Activated CD4-positive, alpha-beta memory T cell treated with anti-CD3 and anti-CD28 coated beads for 36 hours (primary cell): ENCODE measurements at regions of chr9 and their contacts with region 1.

Region 1: DNA sequence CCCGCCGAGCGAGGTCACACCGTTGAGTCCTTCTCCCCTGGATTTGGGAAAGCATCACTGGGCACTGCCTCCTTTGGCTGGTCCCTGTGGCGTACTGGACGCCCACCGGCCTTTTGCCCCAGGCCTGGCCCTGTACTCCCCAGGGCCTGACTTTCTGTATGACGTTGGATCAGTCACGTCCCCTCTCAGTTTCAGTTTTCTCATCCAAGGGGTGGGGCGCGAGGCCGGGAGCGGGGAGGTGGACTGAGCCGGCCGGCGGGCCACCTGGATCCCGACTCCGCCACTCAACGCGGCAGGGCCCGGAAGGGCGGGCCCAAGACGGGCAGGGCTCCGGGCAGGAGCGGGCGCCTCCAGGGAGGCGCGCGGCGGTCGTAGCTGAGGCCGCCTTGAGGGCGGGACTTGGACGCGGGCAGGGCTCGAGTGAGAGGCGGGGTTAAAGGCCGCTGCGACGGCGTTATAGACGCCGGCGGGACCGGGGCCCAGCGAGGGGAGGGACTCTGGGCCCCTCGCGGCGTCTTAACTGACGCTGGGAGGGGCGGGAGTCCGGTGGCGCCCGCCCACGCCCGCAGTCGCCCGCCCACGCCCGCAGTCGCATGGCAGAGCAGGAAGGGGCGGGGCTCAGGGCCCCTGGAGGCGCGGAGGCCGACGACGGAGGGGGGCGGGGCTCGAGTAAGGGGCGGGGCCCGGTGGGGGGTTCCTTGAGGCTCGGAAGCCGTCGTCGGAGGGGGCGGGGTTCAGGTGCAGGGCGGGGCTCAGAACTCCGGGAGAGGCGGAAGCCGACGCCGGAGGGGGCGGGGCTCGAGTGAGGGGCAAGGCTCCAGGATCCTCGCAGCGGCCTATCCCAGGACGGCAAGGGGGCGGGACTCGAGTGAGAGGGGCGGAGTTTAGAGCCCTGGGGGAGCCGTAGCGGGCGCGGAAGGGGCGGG is 549 bp upstream of the CARD19 start:
- DNase-seq: peak; percentile 100
- H3K4me3 Mint-ChIP-seq: peak overlapping the region; percentile 83
- H3K27ac Mint-ChIP-seq: peak overlapping the region; percentile 98
- H3K4me1 Mint-ChIP-seq: peaks cover 73% of the 10 kb centered on the region
- H3K27me3 Mint-ChIP-seq: no peaks in the 10 kb centered on the region

Region 2: GRCh38 chr9:92877531-92878430 is 217.7 kb before region 1 on chr9 and contains the start of gene ZNF484:
- CTCF ChIA-PET with region 1: no interaction called
- POLR2A ChIA-PET with region 1: no interaction called
- intact Hi-C with region 1: loop called (anchors 10 kb)
- DNase-seq: peak; percentile 98
- H3K4me3 Mint-ChIP-seq: peak within 1 kb of the TSS; percentile 97
- H3K27ac Mint-ChIP-seq: peak within 1 kb of the TSS; percentile 97
- H3K4me1 Mint-ChIP-seq: peaks cover 41% of the 10 kb centered on the region
- H3K27me3 Mint-ChIP-seq: no peaks in the 10 kb centered on the region
- total RNA-seq, gene ZNF484: 7.4 to 7.5 TPM

Region 3: GRCh38 chr9:93017621-93018020 is 77.8 kb before region 1 on chr9:
- CTCF ChIA-PET with region 1: no interaction called
- POLR2A ChIA-PET with region 1: no interaction called
- intact Hi-C with region 1: no loop called
- DNase-seq: peak; percentile 6
- H3K4me3 Mint-ChIP-seq: no peak overlapping the region
- H3K27ac Mint-ChIP-seq: no peak overlapping the region
- H3K4me1 Mint-ChIP-seq: peaks cover 24% of the 10 kb centered on the region
- H3K27me3 Mint-ChIP-seq: no peaks in the 10 kb centered on the region

Region 4: DNA sequence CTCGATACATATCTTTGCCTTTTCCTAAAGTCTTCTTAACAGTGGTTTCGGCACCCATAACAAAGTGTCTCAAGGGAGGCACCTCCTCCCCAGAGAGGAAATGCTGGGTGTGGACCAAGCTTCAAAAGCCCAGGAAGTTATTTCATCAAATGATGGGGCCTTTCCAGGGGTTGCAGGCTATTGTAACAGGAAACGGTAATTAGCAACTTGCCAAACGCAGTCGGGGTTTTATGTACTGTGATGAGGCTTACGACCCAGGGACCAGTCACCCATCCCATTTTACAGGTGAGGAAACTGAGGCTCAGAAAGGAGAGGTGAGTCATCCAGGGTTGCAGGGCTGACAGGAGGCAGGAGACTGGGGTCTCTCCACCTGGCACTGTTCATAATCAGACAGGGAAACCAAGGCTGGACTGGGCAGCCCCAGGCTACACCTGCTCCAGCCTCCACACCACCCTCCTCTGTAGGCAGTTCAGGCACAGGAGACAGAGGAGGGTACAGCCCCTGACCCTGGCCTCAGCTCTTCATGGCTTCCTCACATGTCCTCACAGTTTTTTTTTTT is 66.9 kb before region 1 on chr9:
- CTCF ChIA-PET with region 1: no interaction called
- POLR2A ChIA-PET with region 1: no interaction called
- intact Hi-C with region 1: loop called (anchors 2 kb)
- DNase-seq: peak; percentile 77
- H3K4me3 Mint-ChIP-seq: peak overlapping the region; percentile 62
- H3K27ac Mint-ChIP-seq: peak overlapping the region; percentile 96
- H3K4me1 Mint-ChIP-seq: peaks cover 78% of the 10 kb centered on the region
- H3K27me3 Mint-ChIP-seq: no peaks in the 10 kb centered on the region

Region 5: DNA sequence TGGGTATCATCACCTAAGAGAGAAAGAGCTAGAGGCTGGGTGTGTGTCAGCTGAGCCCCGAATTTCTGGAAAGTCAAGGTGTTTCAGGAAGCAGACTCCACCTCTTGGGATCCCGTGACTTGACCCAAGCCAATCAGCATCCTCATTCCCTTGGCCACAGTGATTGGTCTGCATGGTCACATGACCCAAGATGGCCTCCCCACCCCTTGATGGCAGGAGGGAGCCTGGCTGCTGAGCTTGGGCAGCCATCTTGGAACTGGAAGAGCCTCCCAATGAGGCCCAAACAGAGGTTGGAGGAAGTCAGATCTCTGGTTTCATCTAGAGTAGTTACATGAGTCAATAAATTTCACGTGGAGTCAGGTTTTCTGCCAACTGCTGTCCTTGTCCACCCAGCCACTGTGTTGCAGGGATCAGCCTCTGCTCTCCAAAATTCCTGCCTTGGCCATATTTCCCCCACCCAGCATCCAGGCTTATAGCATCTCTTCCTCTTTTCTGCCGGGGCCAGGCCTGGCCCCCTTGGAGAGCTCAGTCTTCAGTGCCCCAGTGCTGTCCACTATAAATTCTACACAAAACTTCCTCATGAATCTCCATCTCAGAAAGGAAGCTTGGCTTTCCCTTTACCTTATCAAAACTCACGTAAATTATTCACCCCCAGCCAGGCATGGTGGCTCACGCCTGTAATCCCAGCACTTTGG is 54.2 kb before region 1 on chr9:
- CTCF ChIA-PET with region 1: no interaction called
- POLR2A ChIA-PET with region 1: no interaction called
- intact Hi-C with region 1: no loop called
- DNase-seq: peak; percentile 65
- H3K4me3 Mint-ChIP-seq: no peak overlapping the region
- H3K27ac Mint-ChIP-seq: peak overlapping the region; percentile 74
- H3K4me1 Mint-ChIP-seq: peaks cover 48% of the 10 kb centered on the region
- H3K27me3 Mint-ChIP-seq: no peaks in the 10 kb centered on the region

Region 6: DNA sequence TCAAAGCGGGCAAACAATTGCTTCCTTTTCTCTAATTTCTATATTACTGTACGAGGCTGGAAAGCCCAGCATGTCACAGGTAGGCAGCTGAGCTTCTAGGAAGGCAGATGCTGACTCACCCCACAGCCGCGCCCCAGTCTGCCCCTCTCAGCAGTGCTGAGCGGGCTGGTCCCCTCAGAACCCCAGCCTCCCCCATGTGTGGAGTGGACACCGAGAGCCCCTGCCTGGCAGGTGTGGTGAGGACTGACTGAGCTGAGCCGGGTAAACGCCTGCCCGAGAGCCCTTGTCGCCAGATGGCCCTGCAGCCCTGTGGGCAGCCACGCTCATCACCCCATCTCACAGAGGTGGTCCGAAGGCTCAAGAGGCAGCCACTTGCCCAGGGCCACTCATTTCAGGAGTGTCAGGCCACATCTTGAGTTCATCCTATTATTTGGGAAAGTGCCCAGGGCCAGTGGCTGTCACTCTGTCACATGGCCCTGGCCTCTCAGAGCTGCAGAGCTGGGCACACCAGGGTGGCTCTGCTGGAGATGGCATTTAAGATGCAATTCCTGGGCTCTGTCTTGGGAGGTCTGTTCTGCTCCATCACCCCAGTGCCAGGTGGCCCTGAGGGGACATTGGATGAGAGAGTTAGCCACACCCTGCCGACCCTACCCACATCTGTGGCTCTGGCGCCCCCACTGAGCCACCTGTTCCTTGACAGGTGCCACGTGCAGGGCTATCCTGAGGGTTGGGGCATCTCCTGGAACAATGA is 13.0 kb after region 1 on chr9:
- CTCF ChIA-PET with region 1: interaction called, 39 read pairs
- POLR2A ChIA-PET with region 1: interaction called, 5 read pairs
- intact Hi-C with region 1: no loop called
- DNase-seq: peak; percentile 82
- H3K4me3 Mint-ChIP-seq: no peak overlapping the region
- H3K27ac Mint-ChIP-seq: peak overlapping the region; percentile 77
- H3K4me1 Mint-ChIP-seq: peaks cover 55% of the 10 kb centered on the region
- H3K27me3 Mint-ChIP-seq: no peaks in the 10 kb centered on the region

Region 7: GRCh38 chr9:93154315-93154903 is 58.9 kb after region 1 on chr9:
- CTCF ChIA-PET with region 1: interaction called, 3 read pairs
- POLR2A ChIA-PET with region 1: no interaction called
- intact Hi-C with region 1: loop called (anchors 2 kb)
- DNase-seq: peak; percentile 69
- H3K4me3 Mint-ChIP-seq: no peak overlapping the region
- H3K27ac Mint-ChIP-seq: no peak overlapping the region
- H3K4me1 Mint-ChIP-seq: peaks cover 30% of the 10 kb centered on the region
- H3K27me3 Mint-ChIP-seq: no peaks in the 10 kb centered on the region